Activated CD4-positive, alpha-beta memory T cell treated with anti-CD3 and anti-CD28 coated beads, Interleukin-2, amount 10 ng/mL, durations not matched to agents 7 days and 5 days (primary cell): ENCODE measurements at regions of chr7 and their contacts with region 1.

Region 1: GRCh38 chr7:992709-993607 is 10.0 kb downstream of the CYP2W1 start:
- DNase-seq: peak; percentile 96
- H3K4me3 Mint-ChIP-seq: no peak overlapping the region
- H3K27ac Mint-ChIP-seq: no peak overlapping the region
- H3K4me1 Mint-ChIP-seq: peaks cover 3% of the 10 kb centered on the region
- H3K27me3 Mint-ChIP-seq: no peaks in the 10 kb centered on the region

Region 2: GRCh38 chr7:867672-868486 is 125.1 kb before region 1 on chr7:
- CTCF ChIA-PET with region 1: no interaction called
- POLR2A ChIA-PET with region 1: no interaction called
- DNase-seq: no peak
- H3K4me3 Mint-ChIP-seq: no peak overlapping the region
- H3K27ac Mint-ChIP-seq: no peak overlapping the region
- H3K4me1 Mint-ChIP-seq: no peaks in the 10 kb centered on the region
- H3K27me3 Mint-ChIP-seq: no peaks in the 10 kb centered on the region

Region 3: GRCh38 chr7:974820-975681 is 17.9 kb before region 1 on chr7 and contains the start of gene COX19:
- CTCF ChIA-PET with region 1: interaction called, 13 read pairs
- POLR2A ChIA-PET with region 1: interaction called, 8 read pairs
- DNase-seq: peak; percentile 90
- H3K4me3 Mint-ChIP-seq: peak within 1 kb of the TSS; percentile 90
- H3K27ac Mint-ChIP-seq: peak within 1 kb of the TSS; percentile 86
- H3K4me1 Mint-ChIP-seq: peaks cover 31% of the 10 kb centered on the region
- H3K27me3 Mint-ChIP-seq: no peaks in the 10 kb centered on the region
- total RNA-seq, gene COX19: 17.4 to 18.2 TPM

Region 4: DNA sequence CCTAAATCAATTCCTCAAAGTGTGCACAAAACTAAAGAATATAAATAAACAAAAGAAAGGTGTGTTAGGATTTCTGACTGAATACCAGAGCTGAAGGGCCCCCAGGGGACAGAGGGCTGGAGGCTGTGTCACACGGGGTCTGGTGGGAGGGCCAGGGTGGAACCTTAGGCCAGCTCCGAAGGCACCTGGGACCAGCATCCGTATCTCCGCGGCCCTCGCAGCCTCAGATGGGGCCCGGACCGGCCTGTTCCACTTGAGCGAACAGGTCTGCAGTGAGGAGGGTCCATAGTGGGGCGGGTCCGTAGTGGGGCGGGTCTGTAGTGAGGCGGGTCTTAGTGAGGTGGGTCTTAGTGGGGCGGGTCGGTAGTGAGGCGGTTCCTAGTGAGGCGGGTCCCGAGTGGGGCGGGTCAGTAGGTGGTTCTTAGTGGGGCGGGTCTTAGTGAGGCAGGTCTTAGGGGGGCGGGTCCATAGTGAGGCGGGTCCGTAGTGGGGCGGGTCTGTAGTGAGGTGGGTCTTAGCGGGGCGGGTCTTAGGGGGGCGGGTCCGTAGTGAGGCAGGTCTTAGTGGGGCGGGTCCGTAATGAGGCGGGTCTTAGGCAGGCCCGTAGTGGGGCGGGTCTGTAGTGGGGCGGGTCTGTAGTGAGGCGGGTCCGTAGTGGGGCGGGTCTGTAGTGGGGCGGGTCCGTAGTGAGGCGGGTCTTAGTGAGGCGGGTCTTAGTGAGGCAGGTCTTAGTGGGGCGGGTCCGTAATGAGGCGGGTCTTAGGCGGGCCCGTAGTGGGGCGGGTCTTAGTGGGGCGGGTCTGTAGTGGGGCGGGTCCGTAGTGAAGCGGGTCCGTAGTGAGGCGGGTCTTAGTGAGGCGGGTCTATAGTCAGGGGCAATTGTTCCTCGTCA is 66.5 kb after region 1 on chr7:
- CTCF ChIA-PET with region 1: interaction called, 270 read pairs
- POLR2A ChIA-PET with region 1: interaction called, 28 read pairs
- DNase-seq: no peak
- H3K4me3 Mint-ChIP-seq: no peak overlapping the region
- H3K27ac Mint-ChIP-seq: peak overlapping the region; percentile 31
- H3K4me1 Mint-ChIP-seq: peaks cover 26% of the 10 kb centered on the region
- H3K27me3 Mint-ChIP-seq: peaks cover 1% of the 10 kb centered on the region

Region 5: GRCh38 chr7:1073142-1073977 is 80.4 kb after region 1 on chr7:
- CTCF ChIA-PET with region 1: interaction called, 19 read pairs
- POLR2A ChIA-PET with region 1: no interaction called
- DNase-seq: no peak
- H3K4me3 Mint-ChIP-seq: no peak overlapping the region
- H3K27ac Mint-ChIP-seq: no peak overlapping the region
- H3K4me1 Mint-ChIP-seq: no peaks in the 10 kb centered on the region
- H3K27me3 Mint-ChIP-seq: no peaks in the 10 kb centered on the region

Region 6: DNA sequence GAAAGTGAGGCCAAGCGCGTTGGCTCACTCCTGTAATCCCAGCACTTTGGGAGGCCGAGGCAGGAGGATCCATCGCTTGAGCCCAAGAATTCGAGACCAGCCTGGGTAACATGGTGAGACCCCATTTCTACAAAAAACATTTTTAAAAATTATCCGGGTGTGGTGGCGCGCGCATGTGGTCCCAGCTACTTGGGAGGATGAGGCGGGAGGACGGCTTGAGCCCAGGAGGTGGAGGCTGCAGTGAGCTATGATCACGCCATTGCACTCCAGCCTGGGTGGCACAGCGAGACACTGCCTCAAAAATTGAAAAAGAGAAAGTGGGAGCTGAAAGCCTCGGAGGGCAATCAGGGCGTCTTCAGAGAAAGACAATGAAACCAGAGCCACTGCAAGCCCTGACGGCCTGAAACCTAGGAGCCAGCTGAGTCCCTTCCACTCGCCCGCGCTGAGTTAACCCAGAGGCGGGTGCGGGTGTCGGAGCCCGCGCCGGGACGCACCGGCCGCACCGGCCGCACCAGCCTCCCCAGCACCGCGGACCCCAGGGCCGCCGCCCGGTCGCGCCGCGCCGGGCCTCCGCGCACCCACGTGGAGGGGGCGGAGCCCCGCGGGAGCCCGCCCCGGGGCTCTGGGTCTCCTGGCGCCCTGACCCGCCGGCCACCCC is 144.7 kb after region 1 on chr7:
- CTCF ChIA-PET with region 1: interaction called, 10 read pairs
- POLR2A ChIA-PET with region 1: no interaction called
- DNase-seq: no peak
- H3K4me3 Mint-ChIP-seq: peak overlapping the region; percentile 85
- H3K27ac Mint-ChIP-seq: peak overlapping the region; percentile 65
- H3K4me1 Mint-ChIP-seq: peaks cover 22% of the 10 kb centered on the region
- H3K27me3 Mint-ChIP-seq: no peaks in the 10 kb centered on the region